Activated CD8-positive, alpha-beta memory T cell treated with anti-CD3 and anti-CD28 coated beads, Interleukin-2, amount 10 ng/mL, durations not matched to agents 7 days and 5 days (primary cell): ENCODE measurements at regions of chr1 and their contacts with region 1.

Region 1: GRCh38 chr1:185595835-185596667 is 138.1 kb upstream of the HMCN1 start:
- DNase-seq: peak; percentile 64
- ATAC-seq: peak; percentile 53
- H3K4me3 Mint-ChIP-seq: no peak overlapping the region
- H3K27ac Mint-ChIP-seq: no peak overlapping the region
- H3K4me1 Mint-ChIP-seq: peaks cover 23% of the 10 kb centered on the region
- H3K27me3 Mint-ChIP-seq: no peaks in the 10 kb centered on the region

Region 2: DNA sequence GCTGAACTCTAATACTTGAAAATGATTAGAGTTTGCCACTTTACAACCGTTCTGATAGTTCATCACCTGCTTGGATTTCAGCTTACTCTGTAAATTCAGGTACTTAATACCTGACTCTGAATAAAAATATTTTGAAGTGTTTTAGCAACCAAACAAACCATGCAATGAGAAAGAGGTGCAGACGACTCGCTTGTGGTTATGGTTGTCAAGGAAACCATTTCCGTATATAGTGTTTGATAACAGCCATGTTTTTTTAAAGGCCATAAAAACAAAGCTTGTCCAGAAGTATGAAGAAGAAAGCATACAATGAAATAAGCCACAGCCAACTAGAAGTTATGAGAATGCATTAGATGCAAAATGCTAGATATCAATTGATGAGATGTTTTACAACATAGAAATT is 29.1 kb before region 1 on chr1:
- CTCF ChIA-PET with region 1: interaction called, 10 read pairs
- DNase-seq: peak; percentile 79
- ATAC-seq: peak; percentile 78
- H3K4me3 Mint-ChIP-seq: peak overlapping the region; percentile 39
- H3K27ac Mint-ChIP-seq: peak overlapping the region; percentile 88
- H3K4me1 Mint-ChIP-seq: peaks cover 51% of the 10 kb centered on the region
- H3K27me3 Mint-ChIP-seq: no peaks in the 10 kb centered on the region

Region 3: GRCh38 chr1:185636848-185637247 is 40.8 kb after region 1 on chr1:
- CTCF ChIA-PET with region 1: interaction called, 17 read pairs
- DNase-seq: peak; percentile 85
- ATAC-seq: peak; percentile 96
- H3K4me3 Mint-ChIP-seq: peak overlapping the region; percentile 7
- H3K27ac Mint-ChIP-seq: peak overlapping the region; percentile 88
- H3K4me1 Mint-ChIP-seq: peaks cover 41% of the 10 kb centered on the region
- H3K27me3 Mint-ChIP-seq: no peaks in the 10 kb centered on the region